ENCODE measurements at regions of chr5 and their contacts with region 1.

Region 1: DNA sequence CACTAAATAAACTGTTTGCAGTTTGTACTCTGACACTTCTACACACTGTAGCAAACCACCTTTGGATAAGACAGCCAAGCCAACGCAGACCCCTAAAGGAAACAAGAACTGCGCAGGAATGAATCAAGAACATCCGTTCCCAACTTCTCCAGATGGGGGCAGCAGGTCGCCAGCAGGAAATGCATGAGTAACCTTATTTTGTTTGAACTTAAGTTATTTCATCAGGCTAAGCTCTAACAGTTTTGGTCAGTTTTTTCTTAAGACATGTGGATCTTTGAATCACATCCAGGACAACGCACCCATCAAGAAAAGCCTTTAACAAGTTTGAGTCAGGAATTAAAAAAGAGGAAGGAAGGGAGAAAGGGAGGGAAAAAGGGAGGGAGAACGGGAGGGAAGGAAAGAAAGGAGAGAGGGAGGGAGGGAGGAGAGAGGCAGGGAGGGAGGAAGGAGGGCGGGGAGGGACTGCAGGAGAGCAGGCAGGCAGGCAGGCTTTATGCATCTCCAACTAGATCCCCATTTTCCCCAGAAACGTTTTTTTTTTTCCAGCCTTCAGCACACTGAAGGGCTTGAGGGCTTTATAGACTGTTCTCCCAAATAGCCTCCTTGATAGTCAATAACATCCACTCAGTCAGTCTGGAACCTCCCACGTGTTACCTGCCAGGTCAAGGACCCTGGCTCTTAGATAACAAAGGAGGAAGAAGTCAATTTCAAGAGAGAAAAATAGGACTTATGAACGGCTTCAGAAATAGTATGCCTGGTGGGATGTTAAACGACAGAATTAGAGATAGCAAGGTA is 22.2 kb downstream of the BHMT start:
- DNase-seq: peak; percentile 10 to 23
- ATAC-seq: peak; percentile 67 to 75
- H3K4me3 ChIP-seq: peak overlapping the region; percentile 34 to 48 (median 40)
- H3K27ac ChIP-seq: peak overlapping the region in 3 of 4 donors; percentile 48 to 71 (median 52)
- H3K4me1 ChIP-seq: peaks cover 4 to 5% of the 10 kb centered on the region in 2 donors
- H3K27me3 ChIP-seq: no peaks in the 10 kb centered on the region
- CTCF ChIP-seq: peak in 4 of 5 experiments; percentile 45 to 68 (median 59)
- POLR2A ChIP-seq: no peak

Region 2: DNA sequence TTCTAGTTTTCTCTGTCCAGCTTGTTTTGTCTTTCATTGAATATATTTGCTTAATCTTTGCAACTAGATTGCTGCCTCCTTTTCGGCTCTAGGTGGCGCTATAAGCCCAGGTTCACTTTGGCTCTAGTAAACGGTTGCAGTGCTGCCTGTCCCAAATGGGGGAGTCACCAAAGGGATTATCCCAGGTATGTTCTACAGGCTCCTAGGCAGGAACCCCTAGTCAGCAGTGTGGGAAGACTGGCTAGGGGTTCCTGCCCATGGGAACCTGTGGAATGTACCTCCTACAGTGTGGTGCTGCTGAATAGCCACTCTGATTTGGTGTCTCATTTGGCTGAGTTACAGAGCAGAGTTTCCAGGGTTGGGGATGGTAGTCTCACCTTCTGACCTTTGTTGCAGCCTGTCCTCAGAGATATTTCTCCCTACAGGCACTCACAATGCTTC is 233.9 kb before region 1 on chr5:
- in situ Hi-C with region 1: no loop called
- intact Hi-C with region 1: loop called (anchors 10 kb)
- DNase-seq: no peak
- ATAC-seq: peak in 1 of 2 donors; percentile 18
- H3K4me3 ChIP-seq: no peak overlapping the region
- H3K27ac ChIP-seq: no peak overlapping the region
- H3K4me1 ChIP-seq: no peaks in the 10 kb centered on the region
- H3K27me3 ChIP-seq: no peaks in the 10 kb centered on the region
- CTCF ChIP-seq: peak; percentile 46 to 67 (median 63)
- POLR2A ChIP-seq: no peak

Region 3: GRCh38 chr5:79011219-79011836 is 122.5 kb before region 1 on chr5:
- in situ Hi-C with region 1: loop called in 3 of 4 experiments (anchors 5 to 10 kb)
- intact Hi-C with region 1: no loop called
- DNase-seq: no peak
- ATAC-seq: no peak
- H3K4me3 ChIP-seq: no peak overlapping the region
- H3K27ac ChIP-seq: no peak overlapping the region
- H3K4me1 ChIP-seq: no peaks in the 10 kb centered on the region
- H3K27me3 ChIP-seq: no peaks in the 10 kb centered on the region
- CTCF ChIP-seq: no peak
- POLR2A ChIP-seq: no peak

Region 4: GRCh38 chr5:79020861-79021561 is 112.8 kb before region 1 on chr5:
- in situ Hi-C with region 1: loop called (anchors 5 to 10 kb)
- intact Hi-C with region 1: loop called (anchors 1 kb)
- DNase-seq: peak; percentile 30 to 33
- ATAC-seq: peak; percentile 72 to 85
- H3K4me3 ChIP-seq: peak overlapping the region in 2 of 4 donors; percentile 6 to 7
- H3K27ac ChIP-seq: no peak overlapping the region
- H3K4me1 ChIP-seq: peaks cover 0 to 3% of the 10 kb centered on the region in 2 donors
- H3K27me3 ChIP-seq: no peaks in the 10 kb centered on the region
- CTCF ChIP-seq: peak in 4 of 5 experiments; percentile 57 to 79 (median 65)
- POLR2A ChIP-seq: no peak

Region 5: GRCh38 chr5:79243224-79243623 is 109.4 kb after region 1 on chr5:
- in situ Hi-C with region 1: no loop called
- intact Hi-C with region 1: loop called (anchors 1 kb)
- DNase-seq: peak in 1 of 2 donors; percentile 16
- ATAC-seq: peak; percentile 88 to 89
- H3K4me3 ChIP-seq: no peak overlapping the region
- H3K27ac ChIP-seq: peak overlapping the region; percentile 49 to 61 (median 52)
- H3K4me1 ChIP-seq: peaks cover 64 to 77% of the 10 kb centered on the region in 2 donors
- H3K27me3 ChIP-seq: no peaks in the 10 kb centered on the region
- CTCF ChIP-seq: peak in 3 of 5 experiments; percentile 21 to 34 (median 25)
- POLR2A ChIP-seq: no peak

Region 6: DNA sequence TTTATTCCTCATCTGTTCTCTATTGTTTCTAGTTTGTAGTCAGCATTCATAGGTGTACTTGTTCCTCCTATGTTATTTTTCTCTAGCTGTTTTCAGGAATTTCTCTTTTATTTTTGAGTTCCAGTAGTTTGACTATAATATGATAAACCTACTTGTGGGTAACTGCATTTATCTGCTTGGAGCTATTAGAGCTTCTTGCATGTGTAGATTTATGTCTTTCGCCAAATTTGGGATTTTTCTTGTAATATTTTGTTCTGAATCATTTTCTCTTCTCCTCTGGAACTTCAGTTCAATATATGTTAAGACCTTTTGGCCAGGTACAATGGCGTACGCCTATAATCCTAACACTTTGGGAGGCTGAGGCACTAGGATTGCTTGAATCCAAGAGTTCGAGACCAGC is 139.5 kb after region 1 on chr5:
- in situ Hi-C with region 1: no loop called
- intact Hi-C with region 1: no loop called
- DNase-seq: no peak
- ATAC-seq: no peak
- H3K4me3 ChIP-seq: no peak overlapping the region
- H3K27ac ChIP-seq: no peak overlapping the region
- H3K4me1 ChIP-seq: peaks cover 2 to 5% of the 10 kb centered on the region in 2 donors
- H3K27me3 ChIP-seq: no peaks in the 10 kb centered on the region
- CTCF ChIP-seq: no peak
- POLR2A ChIP-seq: no peak

Region 7: GRCh38 chr5:79464695-79465332 is 331.0 kb after region 1 on chr5:
- in situ Hi-C with region 1: loop called in 3 of 4 experiments (anchors 10 to 25 kb)
- intact Hi-C with region 1: loop called (anchors 1 kb)
- DNase-seq: no peak
- ATAC-seq: peak in 1 of 2 donors; percentile 60
- H3K4me3 ChIP-seq: no peak overlapping the region
- H3K27ac ChIP-seq: no peak overlapping the region
- H3K4me1 ChIP-seq: peaks cover 3 to 17% of the 10 kb centered on the region in 2 donors
- H3K27me3 ChIP-seq: no peaks in the 10 kb centered on the region
- CTCF ChIP-seq: peak in 4 of 5 experiments; percentile 18 to 60 (median 48)
- POLR2A ChIP-seq: no peak

Measured in gastrocnemius medialis (tissue), 4 donors.